Ovary (tissue), 10 donors: ENCODE measurements at regions of chr5 and their contacts with region 1.

Region 1: DNA sequence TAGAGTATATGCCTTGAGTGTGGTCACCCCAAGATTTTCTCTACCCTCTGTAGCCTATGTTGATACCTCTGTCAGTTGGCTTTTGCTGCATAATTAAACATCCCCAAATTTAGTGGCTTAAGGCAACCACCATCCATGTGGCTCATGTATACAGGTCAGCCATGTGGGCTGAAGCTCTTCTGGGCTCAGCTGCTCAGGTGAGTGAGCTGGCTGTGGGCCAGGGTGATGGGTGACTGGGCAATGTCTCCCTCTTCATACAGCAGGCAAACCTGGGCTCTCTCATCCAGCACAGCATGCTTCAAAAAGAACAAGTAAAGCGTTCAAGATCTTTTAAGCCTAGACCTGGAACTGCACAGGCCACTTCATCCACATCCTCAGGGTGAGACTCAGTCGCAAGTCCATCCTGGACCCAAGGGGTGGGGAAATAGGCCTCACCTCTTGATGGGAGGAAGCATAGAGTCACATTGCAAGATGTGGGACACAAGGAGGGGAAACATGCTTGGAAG is 188.2 kb upstream of the TAS2R1 start:
- DNase-seq: no peak
- H3K4me3 ChIP-seq: no peak overlapping the region
- H3K27ac ChIP-seq: no peak overlapping the region
- H3K4me1 ChIP-seq: no peaks in the 10 kb centered on the region
- H3K27me3 ChIP-seq: no peaks in the 10 kb centered on the region
- CTCF ChIP-seq: no peak
- EP300 ChIP-seq: no peak
- POLR2A ChIP-seq: no peak

Region 2: GRCh38 chr5:9658706-9659105 is 159.7 kb before region 1 on chr5:
- intact Hi-C with region 1: no loop called
- DNase-seq: no peak
- H3K4me3 ChIP-seq: no peak overlapping the region
- H3K27ac ChIP-seq: no peak overlapping the region
- H3K4me1 ChIP-seq: no peaks in the 10 kb centered on the region
- H3K27me3 ChIP-seq: no peaks in the 10 kb centered on the region
- CTCF ChIP-seq: no peak
- EP300 ChIP-seq: no peak
- POLR2A ChIP-seq: no peak

Region 3: GRCh38 chr5:9861666-9862256 is 43.4 kb after region 1 on chr5:
- intact Hi-C with region 1: no loop called
- DNase-seq: no peak
- H3K4me3 ChIP-seq: no peak overlapping the region
- H3K27ac ChIP-seq: no peak overlapping the region
- H3K4me1 ChIP-seq: no peaks in the 10 kb centered on the region
- H3K27me3 ChIP-seq: no peaks in the 10 kb centered on the region
- CTCF ChIP-seq: no peak
- EP300 ChIP-seq: no peak
- POLR2A ChIP-seq: no peak

Region 4: DNA sequence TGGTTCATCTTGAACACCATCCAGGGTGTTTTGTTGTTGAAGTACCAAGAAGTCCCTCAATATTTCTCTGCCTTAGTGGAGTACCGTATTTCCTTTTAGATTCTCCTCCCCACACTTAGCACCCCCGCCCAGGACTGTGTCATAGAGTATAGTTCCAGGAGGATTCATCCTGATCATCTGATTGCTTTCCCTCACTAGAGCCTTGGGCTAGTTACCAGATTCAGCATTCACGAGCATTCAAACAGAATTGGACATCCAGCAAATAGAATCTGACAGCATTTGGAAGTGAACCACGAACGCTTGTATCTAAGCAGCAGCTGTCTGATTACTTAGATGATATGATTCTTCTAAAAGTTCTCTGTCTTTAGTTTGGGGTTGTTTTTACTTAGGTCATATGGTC is 59.8 kb after region 1 on chr5:
- intact Hi-C with region 1: loop called in 1 of 4 experiments (anchors 2 kb)
- DNase-seq: no peak
- H3K4me3 ChIP-seq: no peak overlapping the region
- H3K27ac ChIP-seq: no peak overlapping the region
- H3K4me1 ChIP-seq: no peaks in the 10 kb centered on the region
- H3K27me3 ChIP-seq: no peaks in the 10 kb centered on the region
- CTCF ChIP-seq: no peak
- EP300 ChIP-seq: no peak
- POLR2A ChIP-seq: no peak

Region 5: GRCh38 chr5:11222169-11222568 is 1403.8 kb after region 1 on chr5:
- intact Hi-C with region 1: loop called in 1 of 4 experiments (anchors 10 kb)
- DNase-seq: no peak
- H3K4me3 ChIP-seq: no peak overlapping the region
- H3K27ac ChIP-seq: no peak overlapping the region
- H3K4me1 ChIP-seq: no peaks in the 10 kb centered on the region
- H3K27me3 ChIP-seq: no peaks in the 10 kb centered on the region
- CTCF ChIP-seq: no peak
- EP300 ChIP-seq: no peak
- POLR2A ChIP-seq: no peak